ENCODE measurements at regions of chr3 and their contacts with region 1.

Region 1: DNA sequence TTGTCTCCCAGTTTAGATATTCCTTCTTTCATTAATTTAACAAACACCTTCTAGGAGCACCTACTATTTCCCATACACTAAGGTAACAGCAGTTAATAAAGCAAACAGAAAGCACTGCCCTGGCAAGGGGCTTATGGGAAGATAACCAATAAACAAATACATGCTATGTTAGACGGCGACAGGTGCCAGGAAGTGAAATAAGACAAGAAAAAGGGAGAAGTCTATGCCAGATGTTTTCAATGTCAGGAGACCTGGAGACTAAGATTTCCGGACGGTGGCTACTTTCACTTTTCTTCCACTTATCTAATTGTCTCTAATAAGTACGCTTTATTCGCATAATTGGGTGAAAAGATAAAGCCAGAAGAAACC is 32.5 kb upstream of the ZNF445 start:
- DNase-seq: peak; percentile 22
- H3K4me3 Mint-ChIP-seq: peak overlapping the region; percentile 92
- H3K27ac Mint-ChIP-seq: peak overlapping the region; percentile 93
- H3K4me1 Mint-ChIP-seq: peaks cover 28% of the 10 kb centered on the region
- H3K27me3 Mint-ChIP-seq: no peaks in the 10 kb centered on the region

Region 2: GRCh38 chr3:44323341-44323955 is 186.5 kb before region 1 on chr3:
- CTCF ChIA-PET with region 1: no interaction called
- intact Hi-C with region 1: loop called (anchors 1 kb)
- DNase-seq: peak; percentile 79
- H3K4me3 Mint-ChIP-seq: no peak overlapping the region
- H3K27ac Mint-ChIP-seq: no peak overlapping the region
- H3K4me1 Mint-ChIP-seq: peaks cover 3% of the 10 kb centered on the region
- H3K27me3 Mint-ChIP-seq: peaks cover 3% of the 10 kb centered on the region

Region 3: GRCh38 chr3:44439499-44440295 is 70.3 kb before region 1 on chr3:
- CTCF ChIA-PET with region 1: interaction called, 4 read pairs
- intact Hi-C with region 1: loop called (anchors 1 kb)
- DNase-seq: peak; percentile 88
- H3K4me3 Mint-ChIP-seq: peak overlapping the region; percentile 57
- H3K27ac Mint-ChIP-seq: peak overlapping the region; percentile 94
- H3K4me1 Mint-ChIP-seq: peaks cover 42% of the 10 kb centered on the region
- H3K27me3 Mint-ChIP-seq: no peaks in the 10 kb centered on the region

Measured in activated naive CD4-positive, alpha-beta T cell treated with anti-CD3 and anti-CD28 coated beads for 36 hours (primary cell).